Dorsolateral prefrontal cortex (tissue), 120 donors: ENCODE measurements at regions of chr5 and their contacts with region 1.

Region 1: DNA sequence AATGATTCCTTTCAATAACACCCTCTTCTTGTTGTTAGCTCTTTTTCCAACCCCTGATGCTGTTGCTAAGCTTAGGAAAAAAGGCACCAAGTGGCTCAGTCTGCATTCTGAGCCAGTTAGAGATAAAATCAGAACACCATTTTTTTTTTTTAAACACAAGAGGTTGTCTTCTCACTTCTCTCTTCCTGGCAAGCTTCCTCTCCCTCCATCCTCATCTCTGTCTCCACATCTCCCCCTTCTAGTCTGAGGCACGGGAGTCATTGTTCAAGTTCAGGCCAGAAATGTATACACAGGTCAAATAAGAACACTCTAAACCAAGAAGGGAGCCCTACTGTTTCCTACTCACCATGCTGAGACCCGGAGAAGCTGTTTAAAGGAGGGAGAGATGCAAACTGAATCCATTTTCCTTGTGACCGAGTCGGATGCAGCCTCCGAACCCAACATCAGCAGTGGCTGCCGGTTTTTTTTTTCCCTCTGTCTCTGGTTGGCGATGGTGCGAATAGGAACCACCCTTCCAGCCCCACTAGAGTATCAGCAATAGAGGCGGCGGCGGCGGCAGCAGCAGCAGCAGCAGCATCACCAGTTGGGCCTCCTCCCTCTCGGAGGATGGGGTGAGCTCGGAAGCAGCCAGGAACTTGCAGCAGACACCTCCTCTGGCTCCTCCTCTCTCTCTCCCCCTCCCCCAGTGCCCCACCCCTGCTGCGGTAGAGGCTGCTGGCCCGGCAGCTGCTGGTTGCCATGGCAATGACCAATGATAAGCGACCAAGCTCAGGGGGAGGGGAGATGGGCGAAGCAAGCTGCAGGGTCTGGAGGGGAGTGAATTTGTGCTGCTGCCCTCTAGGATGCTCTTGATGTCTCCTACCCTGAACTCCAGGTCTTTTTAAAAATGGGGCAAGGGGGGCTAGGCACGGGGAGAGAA is at the start of gene JAKMIP2:
- DNase-seq: peak; percentile 93 to 99 (median 97)
- H3K4me3 ChIP-seq: peak within 1 kb of the TSS; percentile 43 to 88 (median 73)
- H3K27ac ChIP-seq: peak within 1 kb of the TSS; percentile 61 to 97 (median 91)
- H3K27me3 ChIP-seq: no peaks in the 10 kb centered on the region
- CTCF ChIP-seq: peak in 52 of 56 donors; percentile 24 to 76 (median 48)
- total RNA-seq, gene JAKMIP2: 32.2 to 60.7 (median 41.7) TPM

Region 2: DNA sequence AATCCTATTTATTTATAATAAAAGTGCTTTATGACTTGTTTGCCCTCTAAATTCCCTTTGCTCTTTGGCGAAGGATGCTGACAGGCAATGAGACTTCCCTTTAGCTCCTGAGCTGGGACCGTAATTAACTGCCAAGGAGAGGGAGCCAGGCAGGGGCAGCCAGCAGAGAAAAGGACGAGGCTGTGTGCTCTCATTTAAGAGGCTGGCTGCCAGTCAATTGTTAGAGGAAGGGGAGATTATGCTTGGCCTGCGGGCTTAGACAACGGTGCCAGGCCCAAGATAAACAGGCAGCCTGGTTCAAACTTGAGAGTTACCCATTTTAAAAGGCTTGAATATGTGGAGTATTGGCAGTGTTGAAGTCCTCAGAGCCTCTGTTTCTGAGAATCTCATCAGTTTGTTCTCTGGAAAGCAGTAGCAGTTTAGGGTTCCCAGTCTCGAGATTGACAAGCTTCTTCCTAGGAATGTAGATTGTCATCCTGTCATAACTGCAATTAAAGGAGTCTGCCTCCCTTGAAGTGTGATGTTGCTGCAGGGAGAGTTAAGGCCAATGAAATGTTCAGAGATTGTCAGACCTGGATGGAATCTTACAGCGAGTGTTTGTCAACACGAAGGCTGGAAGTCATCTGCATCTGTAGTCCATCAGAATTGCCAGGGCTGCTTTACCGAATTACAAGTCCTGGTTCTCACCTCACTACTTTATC is 113.0 kb before region 1 on chr5:
- intact Hi-C with region 1: loop called in 1 of 2 experiments (anchors 10 kb)
- DNase-seq: peak in 1 of 10 donors; percentile 78
- H3K4me3 ChIP-seq: no peak overlapping the region
- H3K27ac ChIP-seq: peak overlapping the region in 20 of 59 donors; percentile 6 to 78 (median 27)
- H3K27me3 ChIP-seq: no peaks in the 10 kb centered on the region
- CTCF ChIP-seq: no peak

Region 3: GRCh38 chr5:147734894-147735293 is 47.5 kb before region 1 on chr5:
- intact Hi-C with region 1: loop called (anchors 2 to 5 kb)
- DNase-seq: no peak
- H3K4me3 ChIP-seq: no peak overlapping the region
- H3K27ac ChIP-seq: peak overlapping the region in 13 of 59 donors; percentile 9 to 61 (median 28)
- H3K27me3 ChIP-seq: no peaks in the 10 kb centered on the region
- CTCF ChIP-seq: no peak